Activated CD4-positive, alpha-beta memory T cell treated with anti-CD3 and anti-CD28 coated beads, Interleukin-2, amount 10 ng/mL, durations not matched to agents 7 days and 5 days (primary cell): ENCODE measurements at regions of chr9 and their contacts with region 1.

Region 1: GRCh38 chr9:74773886-74774479 is 113.7 kb downstream of the TRPM6 start:
- DNase-seq: peak; percentile 76
- H3K4me3 Mint-ChIP-seq: no peak overlapping the region
- H3K27ac Mint-ChIP-seq: no peak overlapping the region
- H3K4me1 Mint-ChIP-seq: peaks cover 16% of the 10 kb centered on the region
- H3K27me3 Mint-ChIP-seq: peaks cover 13% of the 10 kb centered on the region

Region 2: GRCh38 chr9:74940600-74940999 is 166.6 kb after region 1 on chr9:
- CTCF ChIA-PET with region 1: no interaction called
- POLR2A ChIA-PET with region 1: no interaction called
- DNase-seq: no peak
- H3K4me3 Mint-ChIP-seq: no peak overlapping the region
- H3K27ac Mint-ChIP-seq: no peak overlapping the region
- H3K4me1 Mint-ChIP-seq: peaks cover 14% of the 10 kb centered on the region
- H3K27me3 Mint-ChIP-seq: peaks cover 8% of the 10 kb centered on the region

Region 3: DNA sequence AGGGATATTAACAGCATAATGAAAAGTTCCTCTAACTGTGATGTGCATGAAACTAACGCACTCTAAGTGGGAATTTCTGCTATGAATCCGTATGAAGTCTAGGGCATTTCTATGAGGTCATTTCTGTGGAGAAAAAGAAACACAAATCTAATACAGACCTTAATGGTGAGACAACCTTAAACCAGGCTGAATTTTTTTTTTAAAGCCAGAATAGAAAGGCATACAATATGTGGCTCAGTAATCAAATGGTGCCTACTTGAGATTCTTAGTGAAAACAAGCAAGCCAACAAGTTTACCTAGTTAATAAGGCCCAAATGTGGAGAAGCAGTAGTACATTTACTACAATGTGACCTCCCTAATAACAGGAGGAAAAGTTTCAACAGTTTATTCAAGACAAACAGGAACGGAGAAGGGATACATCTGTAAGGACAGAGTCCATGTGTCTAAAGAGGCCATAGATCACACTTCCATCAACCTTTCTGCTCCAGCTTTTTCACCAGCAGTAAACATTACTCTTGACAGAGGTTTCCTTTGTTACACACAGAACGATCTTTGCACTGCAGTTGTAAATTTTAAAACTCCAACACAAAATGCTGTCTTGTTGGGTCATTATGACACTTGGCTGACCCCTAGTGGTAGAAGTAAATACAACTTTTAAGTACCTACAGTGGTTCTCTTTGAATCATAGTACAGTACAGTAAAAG is 227.9 kb after region 1 on chr9:
- CTCF ChIA-PET with region 1: interaction called, 99 read pairs
- POLR2A ChIA-PET with region 1: interaction called, 3 read pairs
- DNase-seq: no peak
- H3K4me3 Mint-ChIP-seq: no peak overlapping the region
- H3K27ac Mint-ChIP-seq: no peak overlapping the region
- H3K4me1 Mint-ChIP-seq: peaks cover 1% of the 10 kb centered on the region
- H3K27me3 Mint-ChIP-seq: no peaks in the 10 kb centered on the region

Region 4: GRCh38 chr9:75071530-75072124 is 297.6 kb after region 1 on chr9:
- CTCF ChIA-PET with region 1: interaction called, 25 read pairs
- POLR2A ChIA-PET with region 1: no interaction called
- DNase-seq: peak; percentile 71
- H3K4me3 Mint-ChIP-seq: no peak overlapping the region
- H3K27ac Mint-ChIP-seq: peak overlapping the region; percentile 53
- H3K4me1 Mint-ChIP-seq: peaks cover 25% of the 10 kb centered on the region
- H3K27me3 Mint-ChIP-seq: no peaks in the 10 kb centered on the region

Region 5: DNA sequence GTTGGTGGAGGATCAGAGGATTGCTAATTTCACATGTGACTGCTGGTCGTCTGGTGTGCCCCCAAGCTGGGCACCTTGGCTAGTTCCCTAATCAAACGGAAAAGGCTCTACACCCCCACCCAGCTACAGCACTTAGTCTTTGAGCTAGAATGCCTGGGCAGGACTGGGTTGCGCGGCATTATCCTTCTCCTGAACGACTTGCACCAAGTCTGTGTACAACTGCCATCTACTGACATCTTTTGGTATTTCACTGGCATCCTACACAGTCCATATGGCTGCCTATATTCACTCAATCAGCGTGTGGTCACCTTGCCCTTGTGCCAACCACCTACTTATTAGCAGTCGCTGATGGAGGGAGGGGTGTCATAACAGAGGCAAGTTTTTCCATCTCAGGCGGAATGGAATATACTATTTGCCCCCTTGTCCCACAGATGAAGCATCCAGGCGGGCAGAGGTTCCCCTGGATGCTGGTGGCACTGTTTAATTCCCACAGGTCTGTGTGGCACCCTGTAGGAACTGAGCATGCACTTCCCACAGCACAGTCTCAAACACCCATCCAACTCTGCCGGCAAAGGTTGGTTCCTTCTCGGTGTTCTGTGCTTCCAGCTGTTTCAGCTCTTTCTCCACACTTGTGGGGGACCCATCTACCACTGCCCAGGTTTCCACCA is 464.5 kb after region 1 on chr9:
- CTCF ChIA-PET with region 1: interaction called, 15 read pairs
- POLR2A ChIA-PET with region 1: no interaction called
- DNase-seq: peak; percentile 49
- H3K4me3 Mint-ChIP-seq: no peak overlapping the region
- H3K27ac Mint-ChIP-seq: no peak overlapping the region
- H3K4me1 Mint-ChIP-seq: no peaks in the 10 kb centered on the region
- H3K27me3 Mint-ChIP-seq: no peaks in the 10 kb centered on the region